ENCODE measurements at regions of chr10 and their contacts with region 1.

Region 1: GRCh38 chr10:55500932-55501559 is 700.0 kb upstream of the PCDH15 start:
- DNase-seq: peak; percentile 69 to 74
- H3K4me3 ChIP-seq: no peak overlapping the region
- H3K4me3 Mint-ChIP-seq: no peak overlapping the region
- H3K27ac Mint-ChIP-seq: no peak overlapping the region
- H3K4me1 ChIP-seq: no peaks in the 10 kb centered on the region
- H3K4me1 Mint-ChIP-seq: no peaks in the 10 kb centered on the region
- H3K27me3 ChIP-seq: no peaks in the 10 kb centered on the region
- H3K27me3 Mint-ChIP-seq: no peaks in the 10 kb centered on the region
- CTCF ChIP-seq: peak; percentile 77 to 82

Region 2: GRCh38 chr10:55287346-55287745 is 213.7 kb before region 1 on chr10:
- CTCF ChIA-PET with region 1: interaction called, 4 read pairs
- POLR2A ChIA-PET with region 1: no interaction called
- intact Hi-C with region 1: loop called (anchors 1 kb)
- DNase-seq: no peak
- H3K4me3 ChIP-seq: no peak overlapping the region
- H3K4me3 Mint-ChIP-seq: no peak overlapping the region
- H3K27ac Mint-ChIP-seq: no peak overlapping the region
- H3K4me1 ChIP-seq: no peaks in the 10 kb centered on the region
- H3K4me1 Mint-ChIP-seq: no peaks in the 10 kb centered on the region
- H3K27me3 ChIP-seq: no peaks in the 10 kb centered on the region
- H3K27me3 Mint-ChIP-seq: no peaks in the 10 kb centered on the region
- CTCF ChIP-seq: peak in 1 of 2 experiments; percentile 17

Region 3: GRCh38 chr10:55747244-55747643 is 246.2 kb after region 1 on chr10:
- CTCF ChIA-PET with region 1: no interaction called
- POLR2A ChIA-PET with region 1: no interaction called
- intact Hi-C with region 1: no loop called
- DNase-seq: no peak
- H3K4me3 ChIP-seq: no peak overlapping the region
- H3K4me3 Mint-ChIP-seq: no peak overlapping the region
- H3K27ac Mint-ChIP-seq: no peak overlapping the region
- H3K4me1 ChIP-seq: no peaks in the 10 kb centered on the region
- H3K4me1 Mint-ChIP-seq: no peaks in the 10 kb centered on the region
- H3K27me3 ChIP-seq: no peaks in the 10 kb centered on the region
- H3K27me3 Mint-ChIP-seq: no peaks in the 10 kb centered on the region
- CTCF ChIP-seq: no peak

Measured in Caco-2 (cell line).